CD14-positive monocyte (primary cell): ENCODE measurements at regions of chr9 and their contacts with region 1.

Region 1: DNA sequence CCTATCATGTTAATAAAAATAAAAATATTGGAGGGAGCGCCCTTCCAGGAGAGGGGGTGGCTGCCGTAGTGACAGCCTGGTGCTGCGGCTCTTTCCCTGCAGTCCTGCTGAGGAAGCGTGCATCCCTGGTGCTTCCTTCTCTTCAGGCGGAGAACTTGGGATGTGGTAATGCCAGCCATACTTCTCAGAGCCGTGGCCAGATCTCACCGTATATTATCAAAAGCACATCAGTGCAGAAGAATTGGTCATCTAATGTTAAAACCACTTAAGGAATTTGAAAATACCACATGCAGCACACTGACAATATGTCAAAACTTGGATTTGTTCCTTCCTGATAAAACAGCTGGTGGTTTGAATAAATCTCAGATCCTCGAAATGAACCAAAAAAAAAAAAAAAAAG is 17.7 kb downstream of the C9orf40 start:
- DNase-seq: no peak
- H3K4me3 ChIP-seq: no peak overlapping the region
- H3K4me3 Mint-ChIP-seq: no peak overlapping the region
- H3K27ac ChIP-seq: no peak overlapping the region
- H3K27ac Mint-ChIP-seq: no peak overlapping the region
- H3K4me1 ChIP-seq: no peaks in the 10 kb centered on the region
- H3K4me1 Mint-ChIP-seq: no peaks in the 10 kb centered on the region
- H3K27me3 ChIP-seq: no peaks in the 10 kb centered on the region
- H3K27me3 Mint-ChIP-seq: peaks cover 3 to 5% (median 5%) of the 10 kb centered on the region in 3 donors
- CTCF ChIP-seq: no peak

Region 2: DNA sequence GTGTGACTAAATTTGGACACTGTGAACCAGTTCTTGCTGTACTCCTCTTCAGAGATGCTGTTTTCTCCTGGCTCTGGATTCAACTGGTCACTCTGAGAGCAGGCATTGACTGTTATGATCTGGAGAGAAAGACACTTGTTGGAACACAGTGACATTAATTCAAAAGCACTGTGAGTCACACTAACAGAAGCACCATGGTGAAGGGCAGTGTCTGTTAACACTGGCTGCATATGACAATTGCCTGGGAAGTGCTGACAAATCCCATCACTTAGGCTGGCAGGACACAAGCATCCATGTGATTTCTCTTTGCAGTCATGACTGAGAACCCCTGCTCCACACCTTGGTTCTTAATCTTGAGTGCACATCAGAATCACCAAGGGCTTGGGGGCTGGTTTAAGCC is 179.7 kb before region 1 on chr9:
- intact Hi-C with region 1: no loop called
- DNase-seq: no peak
- H3K4me3 ChIP-seq: no peak overlapping the region
- H3K4me3 Mint-ChIP-seq: no peak overlapping the region
- H3K27ac ChIP-seq: no peak overlapping the region
- H3K27ac Mint-ChIP-seq: no peak overlapping the region
- H3K4me1 ChIP-seq: no peaks in the 10 kb centered on the region
- H3K4me1 Mint-ChIP-seq: no peaks in the 10 kb centered on the region
- H3K27me3 ChIP-seq: no peaks in the 10 kb centered on the region
- H3K27me3 Mint-ChIP-seq: peaks cover 2 to 5% (median 2%) of the 10 kb centered on the region in 3 donors
- CTCF ChIP-seq: no peak

Region 3: GRCh38 chr9:74951725-74952151 is 16.7 kb after region 1 on chr9:
- intact Hi-C with region 1: no loop called
- DNase-seq: peak; percentile 42 to 51 (median 43)
- H3K4me3 ChIP-seq: peak overlapping the region; percentile 78 to 91 (median 81)
- H3K4me3 Mint-ChIP-seq: peak overlapping the region; percentile 98 to 99
- H3K27ac ChIP-seq: peak overlapping the region in 1 of 2 donors; percentile 93
- H3K27ac Mint-ChIP-seq: peak overlapping the region in 6 of 7 donors; percentile 76 to 96 (median 88)
- H3K4me1 ChIP-seq: peaks cover 9 to 17% of the 10 kb centered on the region in 2 donors
- H3K4me1 Mint-ChIP-seq: peaks cover 23% of the 10 kb centered on the region
- H3K27me3 ChIP-seq: no peaks in the 10 kb centered on the region
- H3K27me3 Mint-ChIP-seq: peaks cover 0 to 3% (median 2%) of the 10 kb centered on the region in 3 donors
- CTCF ChIP-seq: no peak

Region 4: GRCh38 chr9:75001719-75002422 is 66.9 kb after region 1 on chr9:
- intact Hi-C with region 1: loop called in 1 of 2 experiments (anchors 10 kb)
- DNase-seq: peak; percentile 66 to 74 (median 72)
- H3K4me3 ChIP-seq: no peak overlapping the region
- H3K4me3 Mint-ChIP-seq: no peak overlapping the region
- H3K27ac ChIP-seq: no peak overlapping the region
- H3K27ac Mint-ChIP-seq: no peak overlapping the region
- H3K4me1 ChIP-seq: no peaks in the 10 kb centered on the region
- H3K4me1 Mint-ChIP-seq: no peaks in the 10 kb centered on the region
- H3K27me3 ChIP-seq: no peaks in the 10 kb centered on the region
- H3K27me3 Mint-ChIP-seq: peaks cover 0 to 1% (median 0%) of the 10 kb centered on the region in 3 donors
- CTCF ChIP-seq: peak; percentile 92

Region 5: DNA sequence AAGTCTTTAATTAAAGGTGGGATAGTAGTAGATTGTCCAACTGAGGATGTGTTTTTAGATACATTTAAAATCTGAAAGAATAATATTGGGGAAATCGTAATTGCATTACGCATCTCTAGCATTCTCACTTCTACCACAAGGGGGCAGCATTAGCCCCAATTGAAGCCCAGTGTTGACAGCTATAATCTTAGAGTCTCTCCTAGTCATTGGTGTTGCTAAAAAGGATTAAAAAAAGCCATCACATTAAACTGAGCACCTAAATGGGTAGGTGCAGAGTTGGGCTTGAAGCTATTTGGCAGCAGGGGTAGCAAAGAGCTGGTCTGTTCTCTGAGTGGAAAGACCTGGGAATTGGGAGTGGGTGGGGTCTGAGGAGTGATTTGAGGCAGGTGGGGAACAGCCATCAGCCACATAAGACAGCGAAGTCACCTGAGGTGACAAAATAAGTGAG is 330.5 kb after region 1 on chr9:
- intact Hi-C with region 1: no loop called
- DNase-seq: peak; percentile 23 to 45 (median 27)
- H3K4me3 ChIP-seq: no peak overlapping the region
- H3K4me3 Mint-ChIP-seq: no peak overlapping the region
- H3K27ac ChIP-seq: no peak overlapping the region
- H3K27ac Mint-ChIP-seq: no peak overlapping the region
- H3K4me1 ChIP-seq: no peaks in the 10 kb centered on the region
- H3K4me1 Mint-ChIP-seq: peaks cover 1% of the 10 kb centered on the region
- H3K27me3 ChIP-seq: no peaks in the 10 kb centered on the region
- H3K27me3 Mint-ChIP-seq: no peaks in the 10 kb centered on the region
- CTCF ChIP-seq: peak; percentile 88